ENCODE measurements at regions of chr20 and their contacts with region 1.

Region 1: DNA sequence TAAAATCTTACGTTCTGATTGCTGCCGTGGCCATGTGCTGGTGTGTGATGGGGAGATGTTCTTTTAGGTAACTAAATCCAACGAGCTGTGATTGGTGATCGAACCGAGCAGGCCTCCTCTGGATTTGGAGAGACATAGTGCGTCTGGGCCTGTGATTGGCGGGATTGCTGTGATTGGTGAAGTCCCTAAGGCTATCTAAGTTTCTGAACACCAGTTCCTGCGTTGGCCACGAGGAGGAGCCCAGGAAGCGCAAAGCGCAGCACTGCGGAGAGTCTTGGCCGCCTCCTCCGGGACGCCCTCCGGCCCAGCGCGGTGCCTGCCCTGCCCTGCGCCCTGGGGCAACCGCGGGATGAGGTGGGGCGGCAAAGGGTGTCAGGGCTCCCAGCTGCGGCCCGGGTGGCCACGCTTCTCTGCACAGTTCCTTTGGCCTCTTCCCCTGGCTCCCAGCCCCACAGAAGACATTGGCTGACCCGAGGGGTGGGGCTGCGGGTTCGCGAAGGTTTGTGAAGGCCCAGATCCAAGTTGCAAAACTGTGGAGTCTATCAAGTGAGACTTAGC is 33.0 kb downstream of the HNF4A start:
- DNase-seq: peak; percentile 67 to 85
- ATAC-seq: peak; percentile 64 to 84 (median 83)
- H3K4me3 ChIP-seq: no peak overlapping the region
- H3K27ac ChIP-seq: no peak overlapping the region
- H3K4me1 ChIP-seq: no peaks in the 10 kb centered on the region
- H3K27me3 ChIP-seq: peaks cover 0 to 41% (median 0%) of the 10 kb centered on the region in 3 donors
- CTCF ChIP-seq: peak; percentile 61

Region 2: GRCh38 chr20:44217342-44218092 is 171.0 kb before region 1 on chr20:
- intact Hi-C with region 1: loop called in 1 of 2 experiments (anchors 2 kb)
- DNase-seq: peak; percentile 53 to 78
- ATAC-seq: peak; percentile 85 to 95 (median 90)
- H3K4me3 ChIP-seq: peak overlapping the region; percentile 13
- H3K27ac ChIP-seq: no peak overlapping the region
- H3K4me1 ChIP-seq: peaks cover 7% of the 10 kb centered on the region
- H3K27me3 ChIP-seq: no peaks in the 10 kb centered on the region
- CTCF ChIP-seq: peak; percentile 93

Region 3: GRCh38 chr20:44615169-44615791 is 226.7 kb after region 1 on chr20:
- intact Hi-C with region 1: loop called (anchors 5 kb)
- DNase-seq: peak in 1 of 2 donors; percentile 34
- ATAC-seq: no peak
- H3K4me3 ChIP-seq: no peak overlapping the region
- H3K27ac ChIP-seq: peak overlapping the region; percentile 73
- H3K4me1 ChIP-seq: peaks cover 43% of the 10 kb centered on the region
- H3K27me3 ChIP-seq: no peaks in the 10 kb centered on the region
- CTCF ChIP-seq: no peak

Region 4: DNA sequence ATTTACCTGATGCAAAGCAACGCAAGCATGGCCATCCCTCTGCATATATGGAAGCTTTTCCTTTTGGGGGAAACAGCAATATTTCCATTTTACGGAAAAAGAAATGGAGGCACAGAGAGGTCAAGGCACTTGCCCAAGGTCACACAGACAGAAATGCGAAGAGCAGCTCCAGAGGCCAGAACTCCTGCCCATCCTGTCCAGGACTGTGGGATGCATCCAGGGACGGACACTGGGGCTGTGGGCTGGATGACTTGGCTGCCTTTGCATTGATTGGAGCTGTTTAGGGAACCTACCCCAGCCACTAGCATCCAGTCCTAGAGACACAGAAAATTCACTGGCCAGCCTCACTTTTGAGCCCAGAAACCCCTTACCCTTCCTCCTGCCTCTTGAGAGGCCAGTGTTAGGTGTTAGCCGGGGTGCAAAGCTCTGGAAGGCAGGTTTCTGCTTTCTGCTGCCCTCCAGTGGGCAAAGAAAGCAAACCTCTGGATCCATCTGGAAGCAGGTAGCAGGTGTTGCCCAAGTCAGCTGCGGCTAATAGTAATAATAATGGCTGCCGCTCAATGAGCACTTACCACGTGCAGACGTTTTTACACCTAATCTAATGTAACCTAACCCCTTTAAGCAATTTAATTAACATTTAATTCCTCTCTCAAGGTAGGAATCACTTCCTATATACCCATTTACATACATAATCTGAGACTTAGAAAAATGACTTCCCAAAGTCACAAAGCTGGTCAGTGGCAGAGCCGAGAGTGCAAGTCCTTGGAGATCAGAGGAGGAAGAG is 294.9 kb after region 1 on chr20:
- intact Hi-C with region 1: loop called in 1 of 2 experiments (anchors 5 kb)
- DNase-seq: no peak
- ATAC-seq: peak; percentile 52 to 77 (median 60)
- H3K4me3 ChIP-seq: no peak overlapping the region
- H3K27ac ChIP-seq: no peak overlapping the region
- H3K4me1 ChIP-seq: peaks cover 7% of the 10 kb centered on the region
- H3K27me3 ChIP-seq: no peaks in the 10 kb centered on the region
- CTCF ChIP-seq: peak; percentile 67

Measured in psoas muscle (tissue), 8 donors.